ENCODE measurements at regions of chr19 and their contacts with region 1.

Region 1: DNA sequence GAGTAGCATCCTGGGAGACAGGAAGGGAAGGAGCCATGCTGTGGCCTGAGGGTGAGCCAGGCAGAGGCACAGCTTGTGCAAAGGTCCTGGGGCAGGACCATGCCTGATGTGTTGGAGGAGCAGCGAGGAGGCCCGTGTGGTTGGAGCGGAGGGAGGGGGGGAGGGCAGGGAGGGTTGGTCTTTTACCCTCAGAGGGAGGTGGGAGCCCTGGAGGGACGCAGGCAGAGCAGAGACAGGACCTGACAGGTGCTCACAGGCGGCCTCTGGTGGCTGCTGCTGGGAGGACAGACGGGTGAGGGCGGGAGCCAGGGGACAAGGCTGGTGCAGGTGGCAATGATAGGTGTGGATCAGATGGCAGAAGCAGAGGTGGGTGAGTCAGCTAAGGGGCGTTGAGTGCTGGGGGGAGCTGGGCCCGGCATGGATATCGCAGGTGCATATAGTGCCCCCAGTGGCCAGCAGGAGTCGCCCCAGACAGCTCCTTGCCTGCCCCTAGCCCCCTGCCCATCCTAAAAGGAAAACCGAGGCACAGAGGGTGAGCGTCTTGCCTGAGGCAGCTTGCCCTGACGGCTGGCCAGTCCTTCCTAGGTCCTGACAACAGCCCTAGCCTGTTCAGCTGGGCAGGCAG is 9.8 kb upstream of the GNA15 start:
- DNase-seq: peak; percentile 61 to 77 (median 76)
- H3K4me3 ChIP-seq: no peak overlapping the region
- H3K27ac ChIP-seq: no peak overlapping the region
- H3K4me1 ChIP-seq: peaks cover 0 to 51% (median 25%) of the 10 kb centered on the region in 4 experiments
- H3K27me3 ChIP-seq: no peaks in the 10 kb centered on the region

Region 2: DNA sequence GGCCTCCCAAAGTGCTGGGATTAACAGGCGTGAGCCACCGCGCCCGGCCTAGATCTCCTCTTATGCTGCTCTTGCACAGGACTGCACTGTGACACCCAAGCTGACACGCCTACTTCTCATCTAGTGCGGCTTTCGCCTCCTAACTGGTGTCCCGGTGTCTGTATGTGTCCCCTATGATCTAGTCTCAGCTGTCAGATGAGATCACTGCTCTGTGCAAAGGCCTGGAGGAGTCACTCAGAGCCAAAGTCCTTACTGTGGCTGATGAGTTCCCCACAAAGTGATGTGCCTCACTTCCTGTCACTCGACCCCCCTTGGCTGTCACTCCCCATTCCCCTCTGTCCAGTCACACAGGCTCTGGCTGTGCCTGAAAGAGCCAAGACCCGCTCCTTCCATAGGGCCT is 256.4 kb before region 1 on chr19:
- CTCF ChIA-PET with region 1: no interaction called
- POLR2A ChIA-PET with region 1: no interaction called
- DNase-seq: no peak
- H3K4me3 ChIP-seq: no peak overlapping the region
- H3K27ac ChIP-seq: no peak overlapping the region
- H3K4me1 ChIP-seq: peaks cover 0 to 13% (median 4%) of the 10 kb centered on the region in 4 experiments
- H3K27me3 ChIP-seq: no peaks in the 10 kb centered on the region

Region 3: DNA sequence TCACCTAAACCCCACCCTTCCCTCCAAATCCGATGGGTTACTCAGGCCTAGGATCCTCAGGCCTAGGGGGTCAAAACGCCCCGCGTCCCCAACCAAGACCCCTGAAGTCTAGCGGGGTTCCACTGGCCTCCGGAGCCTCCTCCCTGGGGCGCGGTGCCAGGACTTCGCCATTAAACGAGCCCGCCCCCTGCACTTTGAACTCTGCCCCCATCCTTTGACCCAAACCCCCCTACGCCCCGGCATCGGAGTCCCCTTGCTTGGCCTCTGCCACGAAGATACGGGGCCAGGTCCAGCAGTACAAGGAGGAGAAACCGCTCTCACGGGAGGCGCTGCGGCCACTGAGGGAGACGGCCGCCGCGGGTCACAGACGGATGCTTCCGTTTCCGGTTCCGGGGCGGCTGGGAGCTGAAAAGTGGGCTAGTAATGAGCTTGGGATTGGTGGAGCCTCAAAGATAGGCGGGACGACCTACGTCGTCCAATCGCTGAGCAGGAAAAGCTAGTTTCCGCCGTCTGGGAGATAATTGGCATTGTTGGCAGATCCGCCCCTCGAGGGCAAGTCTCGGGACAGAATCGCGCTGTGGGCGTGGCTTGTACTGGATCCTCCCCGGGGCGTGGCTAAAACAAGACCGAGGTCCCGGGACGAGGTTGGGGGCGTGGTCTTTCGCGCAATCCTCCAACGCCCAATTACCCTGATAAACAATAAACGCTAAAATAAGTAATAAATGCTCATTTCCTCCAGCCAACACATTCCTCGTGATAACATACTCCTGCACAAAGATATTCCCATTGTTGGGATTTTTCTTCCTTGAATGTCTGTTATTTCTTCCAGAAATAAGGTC is 175.5 kb before region 1 on chr19:
- CTCF ChIA-PET with region 1: interaction called, 11 read pairs
- POLR2A ChIA-PET with region 1: no interaction called
- DNase-seq: peak; percentile 100
- H3K4me3 ChIP-seq: peak overlapping the region; percentile 70 to 93 (median 84)
- H3K27ac ChIP-seq: peak overlapping the region; percentile 87 to 97
- H3K4me1 ChIP-seq: peaks cover 9 to 22% (median 11%) of the 10 kb centered on the region in 4 experiments
- H3K27me3 ChIP-seq: no peaks in the 10 kb centered on the region

Region 4: DNA sequence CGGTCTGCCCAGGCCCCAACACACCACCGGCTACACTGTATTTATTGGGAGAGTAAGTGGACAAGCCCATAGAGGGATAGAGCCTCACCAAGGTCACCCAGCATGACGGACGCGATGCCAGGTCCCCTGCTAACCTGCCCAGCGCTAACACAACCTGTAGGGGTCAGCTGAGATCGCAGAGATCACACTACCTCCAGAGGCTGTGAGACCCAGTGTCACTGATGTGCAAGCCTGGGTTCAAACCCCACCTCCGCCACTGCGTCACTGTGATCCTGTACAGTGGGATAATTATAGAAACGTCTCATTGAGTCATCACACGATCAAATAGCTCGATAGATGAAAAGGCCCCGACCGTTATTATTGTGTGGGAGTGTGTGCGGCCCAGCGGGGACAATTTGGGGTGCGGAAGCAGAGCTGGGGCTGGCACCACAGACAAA is 86.4 kb before region 1 on chr19:
- CTCF ChIA-PET with region 1: no interaction called
- POLR2A ChIA-PET with region 1: no interaction called
- DNase-seq: no peak
- H3K4me3 ChIP-seq: no peak overlapping the region
- H3K27ac ChIP-seq: no peak overlapping the region
- H3K4me1 ChIP-seq: peaks cover 0 to 33% (median 21%) of the 10 kb centered on the region in 4 experiments
- H3K27me3 ChIP-seq: no peaks in the 10 kb centered on the region

Region 5: DNA sequence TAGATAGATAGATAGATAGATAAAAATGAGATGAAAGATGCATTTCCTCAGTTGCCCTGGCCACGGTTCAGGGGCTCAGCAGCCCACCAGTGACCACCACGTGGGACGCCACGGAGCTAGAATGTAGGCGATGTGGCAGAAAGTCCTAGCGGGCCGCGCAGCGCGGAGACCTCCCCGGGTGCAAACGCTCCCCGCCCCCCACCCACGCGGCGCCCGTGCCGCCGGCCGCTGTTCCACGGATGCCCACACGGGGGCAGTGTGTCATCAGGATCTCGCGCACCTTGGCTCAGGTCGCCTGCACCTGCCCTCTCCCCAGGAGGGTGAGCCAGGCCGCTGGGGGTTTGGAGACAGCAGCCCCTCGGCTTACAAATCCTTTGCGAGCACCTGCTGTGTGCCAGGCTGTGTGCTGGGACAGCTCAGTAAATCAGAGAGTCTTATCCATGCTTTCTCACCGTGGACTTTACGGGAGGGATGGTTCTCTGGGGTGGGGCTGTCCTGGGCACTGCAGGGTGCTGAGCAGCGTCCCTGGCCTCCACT is 50.0 kb before region 1 on chr19:
- CTCF ChIA-PET with region 1: interaction called, 11 read pairs
- POLR2A ChIA-PET with region 1: interaction called, 4 read pairs
- DNase-seq: peak; percentile 45 to 68 (median 64)
- H3K4me3 ChIP-seq: peak overlapping the region in 3 of 7 experiments; percentile 15 to 55 (median 48)
- H3K27ac ChIP-seq: no peak overlapping the region
- H3K4me1 ChIP-seq: peaks cover 0 to 7% (median 3%) of the 10 kb centered on the region in 4 experiments
- H3K27me3 ChIP-seq: peaks cover 0 to 4% (median 0%) of the 10 kb centered on the region in 5 experiments

Region 6: DNA sequence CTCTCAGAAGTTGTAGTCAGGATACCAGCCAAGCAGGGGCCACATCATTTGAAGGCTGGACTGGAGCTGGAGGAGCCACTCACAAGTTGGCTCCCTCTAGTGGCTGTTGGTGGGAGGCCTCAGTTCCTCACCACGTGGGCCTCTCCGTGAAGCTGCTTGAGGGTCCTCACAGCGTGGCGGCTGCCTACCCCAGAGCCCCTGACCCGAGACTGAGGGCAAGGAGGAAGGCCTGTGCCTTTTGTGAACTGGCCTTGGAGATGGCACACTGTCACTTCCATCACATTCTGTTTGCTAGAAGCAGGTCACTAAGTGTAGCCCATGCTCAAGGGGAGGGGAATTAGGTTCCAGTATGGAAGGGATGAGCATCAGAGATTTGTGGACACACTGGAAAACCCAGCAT is 17.2 kb before region 1 on chr19:
- CTCF ChIA-PET with region 1: interaction called, 17 read pairs
- POLR2A ChIA-PET with region 1: no interaction called
- DNase-seq: peak; percentile 69 to 81 (median 73)
- H3K4me3 ChIP-seq: no peak overlapping the region
- H3K27ac ChIP-seq: no peak overlapping the region
- H3K4me1 ChIP-seq: peaks cover 0 to 27% (median 5%) of the 10 kb centered on the region in 4 experiments
- H3K27me3 ChIP-seq: no peaks in the 10 kb centered on the region

Region 7: GRCh38 chr19:3146677-3147100 is 20.7 kb after region 1 on chr19:
- CTCF ChIA-PET with region 1: interaction called, 158 read pairs
- POLR2A ChIA-PET with region 1: interaction called, 5 read pairs
- DNase-seq: peak; percentile 49 to 69 (median 64)
- H3K4me3 ChIP-seq: no peak overlapping the region
- H3K27ac ChIP-seq: peak overlapping the region in 1 of 2 experiments; percentile 49
- H3K4me1 ChIP-seq: peaks cover 3 to 59% (median 55%) of the 10 kb centered on the region in 4 experiments
- H3K27me3 ChIP-seq: no peaks in the 10 kb centered on the region

Region 8: DNA sequence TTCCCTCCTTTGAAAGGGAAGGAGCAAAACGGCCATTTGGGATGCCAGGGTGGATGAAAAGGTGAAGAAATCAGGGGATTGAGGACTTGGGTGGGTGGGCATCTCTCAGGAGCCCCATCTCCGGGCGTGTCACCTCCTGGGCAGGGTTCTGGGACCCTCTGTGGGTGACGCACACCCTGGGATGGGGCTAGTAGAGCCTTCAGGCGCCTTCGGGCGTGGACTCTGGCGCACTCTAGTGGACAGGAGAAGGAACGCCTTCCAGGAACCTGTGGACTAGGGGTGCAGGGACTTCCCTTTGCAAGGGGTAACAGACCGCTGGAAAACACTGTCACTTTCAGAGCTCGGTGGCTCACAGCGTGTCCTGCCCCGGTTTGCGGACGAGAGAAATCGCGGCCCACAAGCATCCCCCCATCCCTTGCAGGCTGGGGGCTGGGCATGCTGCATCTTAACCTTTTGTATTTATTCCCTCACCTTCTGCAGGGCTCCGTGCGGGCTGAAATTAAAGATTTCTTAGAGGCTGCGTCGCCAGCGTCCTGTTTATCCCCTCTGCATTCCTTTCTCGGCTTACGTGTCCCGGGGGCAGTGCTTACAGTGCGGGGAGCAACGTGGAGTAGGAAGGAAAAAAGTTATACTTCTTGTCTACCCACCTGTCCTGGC is 37.3 kb after region 1 on chr19:
- CTCF ChIA-PET with region 1: interaction called, 123 read pairs
- POLR2A ChIA-PET with region 1: interaction called, 6 read pairs
- DNase-seq: peak; percentile 75 to 86 (median 82)
- H3K4me3 ChIP-seq: no peak overlapping the region
- H3K27ac ChIP-seq: no peak overlapping the region
- H3K4me1 ChIP-seq: peaks cover 0 to 18% (median 11%) of the 10 kb centered on the region in 4 experiments
- H3K27me3 ChIP-seq: no peaks in the 10 kb centered on the region

Region 9: GRCh38 chr19:3210347-3211017 is 84.5 kb after region 1 on chr19:
- CTCF ChIA-PET with region 1: no interaction called
- POLR2A ChIA-PET with region 1: no interaction called
- DNase-seq: peak; percentile 31 to 61 (median 40)
- H3K4me3 ChIP-seq: no peak overlapping the region
- H3K27ac ChIP-seq: no peak overlapping the region
- H3K4me1 ChIP-seq: no peaks in the 10 kb centered on the region
- H3K27me3 ChIP-seq: no peaks in the 10 kb centered on the region